Colonic mucosa (tissue), 4 donors: ENCODE measurements at regions of chr5 and their contacts with region 1.

Region 1: GRCh38 chr5:170633235-170634081 is 129.6 kb downstream of the KCNIP1 start:
- DNase-seq: peak; percentile 32
- H3K4me3 ChIP-seq: no peak overlapping the region
- H3K27ac ChIP-seq: peak overlapping the region; percentile 57
- H3K4me1 ChIP-seq: no peaks in the 10 kb centered on the region
- H3K27me3 ChIP-seq: no peaks in the 10 kb centered on the region
- CTCF ChIP-seq: peak; percentile 17

Region 2: DNA sequence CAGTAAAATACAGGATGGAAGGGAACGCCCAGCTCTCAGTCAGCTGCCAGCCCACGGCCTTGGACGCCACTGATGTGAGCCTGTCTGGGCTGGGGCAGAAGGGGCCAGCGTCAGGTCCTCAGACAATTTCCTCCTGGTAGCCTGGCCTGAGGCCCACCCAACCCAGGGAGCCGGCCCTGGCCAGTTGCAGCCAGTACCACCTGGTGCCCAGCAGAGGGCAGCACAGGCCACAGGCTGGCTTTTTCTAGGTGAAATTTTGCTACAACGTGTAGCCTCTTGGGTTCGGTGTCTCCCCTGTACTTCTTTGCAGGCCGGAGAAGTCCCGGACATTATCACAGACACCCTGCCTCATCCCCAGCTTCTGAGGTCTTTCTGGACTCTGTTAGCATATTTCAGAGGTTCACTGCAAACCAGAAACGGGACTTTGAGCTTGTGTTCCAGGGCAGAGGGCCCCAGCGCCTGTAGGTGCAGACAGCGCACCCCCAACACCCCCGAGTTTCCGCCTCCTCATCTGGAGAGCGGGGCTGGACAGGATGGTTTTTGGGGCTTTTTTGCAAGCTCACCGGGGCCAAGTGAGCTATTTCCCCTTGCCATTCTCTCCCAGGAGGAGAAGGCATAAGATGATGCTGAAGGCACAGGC is 198.4 kb before region 1 on chr5:
- intact Hi-C with region 1: loop called (anchors 5 kb)
- DNase-seq: peak; percentile 38
- H3K4me3 ChIP-seq: no peak overlapping the region
- H3K27ac ChIP-seq: no peak overlapping the region
- H3K4me1 ChIP-seq: no peaks in the 10 kb centered on the region
- H3K27me3 ChIP-seq: no peaks in the 10 kb centered on the region
- CTCF ChIP-seq: peak; percentile 95

Region 3: GRCh38 chr5:171102877-171103610 is 469.6 kb after region 1 on chr5:
- intact Hi-C with region 1: no loop called
- DNase-seq: no peak
- H3K4me3 ChIP-seq: no peak overlapping the region
- H3K27ac ChIP-seq: no peak overlapping the region
- H3K4me1 ChIP-seq: no peaks in the 10 kb centered on the region
- H3K27me3 ChIP-seq: no peaks in the 10 kb centered on the region
- CTCF ChIP-seq: no peak